ENCODE measurements at regions of chr19 and their contacts with region 1.

Region 1: GRCh38 chr19:29084266-29084665 is 128.7 kb downstream of the UQCRFS1 start:
- DNase-seq: no peak
- ATAC-seq: no peak
- H3K4me3 ChIP-seq: no peak overlapping the region
- H3K27ac ChIP-seq: no peak overlapping the region
- H3K4me1 ChIP-seq: no peaks in the 10 kb centered on the region
- H3K27me3 ChIP-seq: no peaks in the 10 kb centered on the region

Region 2: GRCh38 chr19:29212648-29213573 is 128.6 kb after region 1 on chr19 and contains the start of gene UQCRFS1:
- intact Hi-C with region 1: no loop called
- DNase-seq: peak; percentile 97 to 98
- ATAC-seq: peak; percentile 99
- H3K4me3 ChIP-seq: peak within 1 kb of the TSS; percentile 78 to 92
- H3K27ac ChIP-seq: peak within 1 kb of the TSS; percentile 9 to 83
- H3K4me1 ChIP-seq: peaks cover 0 to 5% of the 10 kb centered on the region in 2 donors
- H3K27me3 ChIP-seq: no peaks in the 10 kb centered on the region
- total RNA-seq, gene UQCRFS1: 14.1 to 19.6 TPM

Region 3: DNA sequence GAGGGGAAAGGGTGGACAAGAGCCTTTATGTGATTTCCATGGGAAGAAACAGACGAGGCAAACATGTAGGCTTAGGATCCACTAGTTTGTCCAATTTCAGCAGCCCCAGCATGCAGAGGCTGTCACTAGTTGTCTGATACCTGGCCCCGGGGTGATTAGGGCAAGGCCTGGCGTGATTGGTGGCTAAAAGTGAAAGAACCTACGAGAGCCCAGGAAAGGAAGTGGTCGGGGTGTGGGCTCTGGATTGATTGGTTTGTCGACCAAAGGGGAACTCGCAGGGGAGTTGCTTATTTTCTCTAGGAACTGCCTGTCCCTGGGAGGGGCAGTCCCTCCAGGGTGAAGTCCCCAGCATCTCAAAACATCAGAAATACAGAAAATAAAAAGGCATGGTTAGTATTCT is 192.8 kb after region 1 on chr19:
- intact Hi-C with region 1: loop called in 1 of 2 experiments (anchors 10 kb)
- DNase-seq: no peak
- ATAC-seq: no peak
- H3K4me3 ChIP-seq: no peak overlapping the region
- H3K27ac ChIP-seq: no peak overlapping the region
- H3K4me1 ChIP-seq: no peaks in the 10 kb centered on the region
- H3K27me3 ChIP-seq: no peaks in the 10 kb centered on the region

Region 4: GRCh38 chr19:29315556-29316190 is 231.4 kb after region 1 on chr19:
- intact Hi-C with region 1: no loop called
- DNase-seq: no peak
- ATAC-seq: no peak
- H3K4me3 ChIP-seq: no peak overlapping the region
- H3K27ac ChIP-seq: no peak overlapping the region
- H3K4me1 ChIP-seq: no peaks in the 10 kb centered on the region
- H3K27me3 ChIP-seq: no peaks in the 10 kb centered on the region

Measured in aorta (tissue), 5 donors.